CD4-positive, alpha-beta T cell (primary cell): ENCODE measurements at regions of chr17 and their contacts with region 1.

Region 1: GRCh38 chr17:78781948-78782916 is at the start of gene CYTH1:
- DNase-seq: peak; percentile 96 to 100 (median 99)
- ATAC-seq: peak; percentile 67
- H3K4me3 ChIP-seq: peak within 1 kb of the TSS; percentile 93
- H3K4me3 Mint-ChIP-seq: peak within 1 kb of the TSS; percentile 96
- H3K27ac ChIP-seq: peak within 1 kb of the TSS; percentile 88 to 97
- H3K27ac Mint-ChIP-seq: peak within 1 kb of the TSS; percentile 95
- H3K4me1 ChIP-seq: peaks cover 74% of the 10 kb centered on the region
- H3K4me1 Mint-ChIP-seq: peaks cover 62% of the 10 kb centered on the region
- H3K27me3 ChIP-seq: no peaks in the 10 kb centered on the region
- H3K27me3 Mint-ChIP-seq: no peaks in the 10 kb centered on the region
- CTCF ChIP-seq: no peak
- total RNA-seq, gene CYTH1: 521 to 525 TPM

Region 2: DNA sequence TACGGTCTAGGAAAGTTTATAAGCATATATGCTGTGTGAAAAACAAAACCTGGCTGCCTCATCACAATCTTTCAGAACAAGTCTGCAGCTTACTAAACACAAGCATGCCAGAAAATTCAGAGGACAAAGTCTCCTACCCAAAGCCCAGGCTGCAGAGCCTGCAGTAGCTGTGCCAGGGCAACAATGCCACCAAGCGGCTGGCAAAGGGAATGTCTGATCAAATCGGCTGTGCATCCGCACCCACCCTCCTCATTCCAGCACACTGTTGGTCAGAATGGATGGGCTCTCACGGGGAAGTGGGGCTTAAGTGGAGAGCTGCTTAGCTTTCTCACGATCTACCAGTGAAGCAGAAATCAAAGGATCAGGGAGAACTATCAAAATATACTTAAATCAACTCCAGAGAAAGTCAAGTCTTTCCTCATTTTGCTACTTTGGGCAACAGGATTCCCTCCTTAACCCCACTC is 73.7 kb before region 1 on chr17:
- CTCF ChIA-PET with region 1: interaction called, 5 read pairs
- POLR2A ChIA-PET with region 1: interaction called, 4 read pairs
- intact Hi-C with region 1: loop called in 1 of 2 experiments (anchors 2 kb)
- DNase-seq: peak; percentile 42 to 81 (median 54)
- ATAC-seq: peak; percentile 81
- H3K4me3 ChIP-seq: no peak overlapping the region
- H3K4me3 Mint-ChIP-seq: peak overlapping the region; percentile 79
- H3K27ac ChIP-seq: peak overlapping the region; percentile 11 to 39
- H3K27ac Mint-ChIP-seq: peak overlapping the region; percentile 78
- H3K4me1 ChIP-seq: peaks cover 51% of the 10 kb centered on the region
- H3K4me1 Mint-ChIP-seq: peaks cover 67% of the 10 kb centered on the region
- H3K27me3 ChIP-seq: no peaks in the 10 kb centered on the region
- H3K27me3 Mint-ChIP-seq: no peaks in the 10 kb centered on the region
- CTCF ChIP-seq: peak; percentile 87

Region 3: GRCh38 chr17:78745407-78746088 is 36.7 kb before region 1 on chr17:
- CTCF ChIA-PET with region 1: interaction called, 4 read pairs
- POLR2A ChIA-PET with region 1: interaction called, 51 read pairs
- intact Hi-C with region 1: loop called (anchors 1 to 2 kb)
- DNase-seq: peak in 9 of 14 experiments; percentile 37 to 83 (median 48)
- ATAC-seq: no peak
- H3K4me3 ChIP-seq: no peak overlapping the region
- H3K4me3 Mint-ChIP-seq: peak overlapping the region; percentile 78
- H3K27ac ChIP-seq: peak overlapping the region; percentile 81 to 84
- H3K27ac Mint-ChIP-seq: peak overlapping the region; percentile 85
- H3K4me1 ChIP-seq: peaks cover 89% of the 10 kb centered on the region
- H3K4me1 Mint-ChIP-seq: peaks cover 94% of the 10 kb centered on the region
- H3K27me3 ChIP-seq: no peaks in the 10 kb centered on the region
- H3K27me3 Mint-ChIP-seq: no peaks in the 10 kb centered on the region
- CTCF ChIP-seq: peak; percentile 86

Region 4: GRCh38 chr17:78759203-78759968 is 22.8 kb before region 1 on chr17:
- CTCF ChIA-PET with region 1: interaction called, 4 read pairs
- POLR2A ChIA-PET with region 1: interaction called, 60 read pairs
- intact Hi-C with region 1: loop called in 1 of 2 experiments (anchors 2 kb)
- DNase-seq: peak; percentile 72 to 94 (median 82)
- ATAC-seq: peak; percentile 80
- H3K4me3 ChIP-seq: peak overlapping the region; percentile 32
- H3K4me3 Mint-ChIP-seq: peak overlapping the region; percentile 73
- H3K27ac ChIP-seq: peak overlapping the region; percentile 94 to 95
- H3K27ac Mint-ChIP-seq: peak overlapping the region; percentile 87
- H3K4me1 ChIP-seq: peaks cover 92% of the 10 kb centered on the region
- H3K4me1 Mint-ChIP-seq: peaks cover 85% of the 10 kb centered on the region
- H3K27me3 ChIP-seq: no peaks in the 10 kb centered on the region
- H3K27me3 Mint-ChIP-seq: no peaks in the 10 kb centered on the region
- CTCF ChIP-seq: no peak

Region 5: GRCh38 chr17:78806451-78806850 is 24.2 kb after region 1 on chr17:
- CTCF ChIA-PET with region 1: interaction called, 3 read pairs
- POLR2A ChIA-PET with region 1: interaction called, 38 read pairs
- intact Hi-C with region 1: loop called (anchors 2 kb)
- DNase-seq: peak in 9 of 14 experiments; percentile 27 to 87 (median 66)
- ATAC-seq: peak; percentile 71
- H3K4me3 ChIP-seq: no peak overlapping the region
- H3K4me3 Mint-ChIP-seq: peak overlapping the region; percentile 84
- H3K27ac ChIP-seq: peak overlapping the region in 1 of 2 donors; percentile 64
- H3K27ac Mint-ChIP-seq: peak overlapping the region; percentile 95
- H3K4me1 ChIP-seq: peaks cover 52% of the 10 kb centered on the region
- H3K4me1 Mint-ChIP-seq: peaks cover 63% of the 10 kb centered on the region
- H3K27me3 ChIP-seq: no peaks in the 10 kb centered on the region
- H3K27me3 Mint-ChIP-seq: no peaks in the 10 kb centered on the region
- CTCF ChIP-seq: peak; percentile 47

Region 6: DNA sequence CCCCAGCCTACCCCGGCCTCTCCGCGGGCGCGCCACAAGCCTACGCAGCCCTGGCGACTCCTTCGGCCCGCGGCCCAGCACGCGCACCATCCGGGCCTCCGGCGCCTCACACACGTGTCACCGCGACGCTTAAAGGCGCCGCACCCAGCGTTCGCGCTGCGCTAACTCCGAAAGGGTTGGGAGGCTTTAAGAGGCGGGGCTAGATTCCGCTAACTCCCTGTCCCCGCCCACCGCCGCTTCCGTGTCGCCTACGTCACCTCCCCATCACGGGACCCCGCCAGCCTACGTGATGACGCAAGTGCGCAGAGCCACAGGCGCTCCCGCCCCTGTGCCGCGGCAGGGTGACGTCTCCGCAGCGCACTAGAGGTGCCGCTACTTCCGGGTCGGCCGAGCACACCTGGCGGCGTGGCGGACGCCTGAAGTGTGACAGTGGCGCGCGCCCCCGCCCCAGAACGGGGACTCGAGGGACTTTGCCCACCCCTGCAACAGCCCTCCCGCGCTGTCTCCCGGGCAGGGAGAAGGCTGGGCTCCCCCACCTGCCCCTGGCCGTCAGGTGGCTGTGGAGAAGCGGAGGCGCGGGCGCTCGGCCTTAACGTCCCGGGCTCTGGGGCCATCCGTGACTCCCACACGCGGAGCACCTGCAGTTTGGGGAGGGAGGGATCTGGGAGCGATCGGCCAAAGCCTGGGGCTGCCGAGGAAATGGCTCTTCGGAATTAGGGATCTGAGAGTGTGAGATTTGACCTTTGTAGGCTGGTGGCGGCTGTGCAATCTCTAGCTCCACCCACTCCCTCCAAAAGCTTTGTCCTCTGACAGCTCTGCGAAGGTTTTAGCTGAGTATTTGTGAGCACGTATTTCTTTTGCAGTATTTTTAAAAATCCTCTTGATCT is 58.7 kb after region 1 on chr17 and contains the start of gene USP36:
- CTCF ChIA-PET with region 1: interaction called, 3 read pairs
- POLR2A ChIA-PET with region 1: interaction called, 5 read pairs
- intact Hi-C with region 1: loop called (anchors 1 kb)
- DNase-seq: peak; percentile 99 to 100 (median 100)
- ATAC-seq: peak; percentile 80
- H3K4me3 ChIP-seq: peak within 1 kb of the TSS; percentile 91
- H3K4me3 Mint-ChIP-seq: peak within 1 kb of the TSS; percentile 99
- H3K27ac ChIP-seq: peak within 1 kb of the TSS; percentile 96 to 99
- H3K27ac Mint-ChIP-seq: peak within 1 kb of the TSS; percentile 93
- H3K4me1 ChIP-seq: peaks cover 52% of the 10 kb centered on the region
- H3K4me1 Mint-ChIP-seq: peaks cover 56% of the 10 kb centered on the region
- H3K27me3 ChIP-seq: no peaks in the 10 kb centered on the region
- H3K27me3 Mint-ChIP-seq: no peaks in the 10 kb centered on the region
- CTCF ChIP-seq: peak; percentile 44
- total RNA-seq, gene USP36: 489 to 494 TPM

Region 7: DNA sequence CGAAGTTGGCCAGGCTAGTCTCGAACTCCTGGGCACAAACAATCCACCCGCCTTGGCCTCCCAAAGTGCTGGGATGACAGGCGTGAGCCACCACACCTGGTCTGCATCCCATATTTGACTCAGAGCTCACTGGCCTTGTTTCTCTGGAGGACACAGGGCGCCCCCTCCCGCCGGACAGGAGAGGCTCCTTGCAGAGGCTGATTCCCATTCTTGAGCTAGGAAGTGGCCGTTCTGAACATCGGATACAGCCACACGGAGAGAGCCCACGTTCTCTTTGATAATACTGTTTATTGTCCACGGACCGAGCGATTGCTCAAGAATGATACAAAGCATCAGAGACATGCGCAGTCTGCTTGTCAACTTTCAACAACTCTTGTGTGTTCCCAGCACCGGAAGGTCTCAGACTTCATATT is 70.5 kb after region 1 on chr17:
- CTCF ChIA-PET with region 1: no interaction called
- POLR2A ChIA-PET with region 1: no interaction called
- intact Hi-C with region 1: no loop called
- DNase-seq: no peak
- ATAC-seq: no peak
- H3K4me3 ChIP-seq: no peak overlapping the region
- H3K4me3 Mint-ChIP-seq: no peak overlapping the region
- H3K27ac ChIP-seq: no peak overlapping the region
- H3K27ac Mint-ChIP-seq: no peak overlapping the region
- H3K4me1 ChIP-seq: no peaks in the 10 kb centered on the region
- H3K4me1 Mint-ChIP-seq: no peaks in the 10 kb centered on the region
- H3K27me3 ChIP-seq: no peaks in the 10 kb centered on the region
- H3K27me3 Mint-ChIP-seq: no peaks in the 10 kb centered on the region
- CTCF ChIP-seq: no peak